Dendritic cell treated with granulocyte-macrophage colony-stimulating factor and Interleukin-4, amounts not matched to agents 40 ng/mL and 50 ng/mL, for 4 days (primary cell): ENCODE measurements at regions of chr7 and their contacts with region 1.

Region 1: DNA sequence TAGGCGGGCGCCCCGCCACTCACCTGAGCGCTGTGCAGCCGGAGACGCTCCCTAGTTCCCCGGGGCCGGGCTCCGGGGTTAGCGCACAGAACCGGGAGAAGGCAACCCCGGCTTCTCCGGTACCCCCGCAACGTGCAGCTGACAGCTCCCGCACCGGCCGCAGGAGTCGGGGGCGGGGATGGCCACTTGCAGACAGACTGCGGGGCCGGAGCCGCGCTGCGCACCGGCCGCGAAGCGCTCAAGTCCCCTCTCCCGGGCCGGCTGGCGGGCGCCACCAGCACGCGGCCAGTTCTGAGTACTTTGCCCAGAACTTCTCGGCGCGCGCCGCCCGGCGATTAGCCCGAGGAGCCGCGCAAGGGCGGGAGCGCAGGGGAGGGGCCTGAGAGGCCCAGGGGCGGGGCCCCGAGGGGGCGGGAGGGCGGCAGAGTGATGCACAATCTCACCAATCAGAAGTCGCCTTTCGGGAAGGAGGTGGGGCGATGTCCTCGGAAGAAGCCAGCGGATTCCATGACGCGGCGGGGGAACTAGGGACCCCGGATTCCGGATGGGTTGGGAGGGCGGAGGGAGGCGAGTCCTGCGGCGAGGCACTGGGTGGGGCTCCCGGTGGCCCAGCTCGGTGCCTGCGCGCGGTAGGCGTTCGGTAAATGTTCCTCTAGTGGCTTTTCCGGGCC is at the start of gene OSBPL3:
- H3K4me3 Mint-ChIP-seq: peak within 1 kb of the TSS; percentile 99
- H3K27ac Mint-ChIP-seq: peak within 1 kb of the TSS; percentile 100
- H3K4me1 Mint-ChIP-seq: peaks cover 72% of the 10 kb centered on the region
- H3K27me3 Mint-ChIP-seq: peaks cover 19% of the 10 kb centered on the region

Region 2: DNA sequence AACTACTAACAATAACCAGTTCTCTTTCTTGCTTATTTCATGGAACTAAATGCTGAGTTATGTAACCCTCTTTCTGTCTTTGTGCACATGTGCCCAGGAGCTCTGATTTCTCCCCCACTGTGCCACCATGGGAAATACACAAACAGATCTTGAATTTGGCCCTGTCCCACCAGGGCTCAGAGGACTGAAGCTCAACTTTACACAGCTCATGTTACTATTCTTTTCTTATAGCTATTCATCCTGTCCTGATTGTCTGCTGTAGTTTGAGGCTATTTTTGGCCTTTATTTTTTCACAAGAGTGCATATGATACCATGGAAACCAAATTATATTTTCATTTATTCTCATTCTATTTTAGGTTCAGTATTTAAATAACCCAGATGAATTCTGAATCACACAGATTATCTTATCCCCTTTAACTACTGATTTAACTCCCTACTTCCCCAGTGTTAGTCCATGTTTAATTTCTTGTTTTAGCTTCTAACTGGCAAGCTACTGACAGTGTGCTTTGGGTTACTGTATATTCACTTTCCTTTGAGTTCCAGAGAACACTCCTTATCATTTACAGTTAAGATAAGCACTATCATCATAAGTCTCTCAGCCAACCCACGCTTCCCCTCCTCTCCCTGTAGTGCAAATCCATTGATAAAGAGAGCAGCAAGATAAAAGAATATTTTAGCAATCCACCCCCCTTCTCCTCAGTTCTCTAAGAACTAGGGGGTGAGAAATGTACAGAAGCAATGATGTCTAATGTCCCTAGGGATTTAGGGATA is 150.9 kb before region 1 on chr7:
- intact Hi-C with region 1: loop called (anchors 2 kb)
- H3K4me3 Mint-ChIP-seq: no peak overlapping the region
- H3K27ac Mint-ChIP-seq: no peak overlapping the region
- H3K4me1 Mint-ChIP-seq: peaks cover 89% of the 10 kb centered on the region
- H3K27me3 Mint-ChIP-seq: no peaks in the 10 kb centered on the region

Region 3: DNA sequence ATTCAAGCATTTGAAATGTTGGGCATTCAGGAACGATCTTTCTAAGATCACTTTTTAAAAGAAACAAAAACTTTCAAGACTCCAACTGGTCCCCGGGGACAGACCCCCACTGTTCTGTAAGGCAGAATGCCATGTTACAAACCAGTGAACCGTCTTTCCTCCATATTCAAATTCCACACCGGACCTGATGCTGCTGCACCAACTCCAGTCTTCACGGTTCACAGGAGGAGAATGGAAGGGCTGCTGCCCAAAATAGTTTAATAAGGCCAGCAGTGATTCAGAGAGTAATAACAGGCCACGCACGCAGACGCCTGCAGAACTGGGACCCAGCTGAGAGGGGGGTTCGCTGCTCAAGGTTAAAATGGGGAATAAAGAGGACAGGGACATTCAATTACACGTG is 47.2 kb before region 1 on chr7:
- intact Hi-C with region 1: loop called (anchors 5 kb)
- H3K4me3 Mint-ChIP-seq: no peak overlapping the region
- H3K27ac Mint-ChIP-seq: peak overlapping the region; percentile 28
- H3K4me1 Mint-ChIP-seq: peaks cover 37% of the 10 kb centered on the region
- H3K27me3 Mint-ChIP-seq: no peaks in the 10 kb centered on the region

Region 4: GRCh38 chr7:24963218-24963617 is 16.8 kb before region 1 on chr7:
- intact Hi-C with region 1: loop called (anchors 2 kb)
- H3K4me3 Mint-ChIP-seq: peak overlapping the region; percentile 42
- H3K27ac Mint-ChIP-seq: peak overlapping the region; percentile 95
- H3K4me1 Mint-ChIP-seq: peaks cover 80% of the 10 kb centered on the region
- H3K27me3 Mint-ChIP-seq: no peaks in the 10 kb centered on the region